ENCODE measurements at regions of chr17 and their contacts with region 1.

Region 1: DNA sequence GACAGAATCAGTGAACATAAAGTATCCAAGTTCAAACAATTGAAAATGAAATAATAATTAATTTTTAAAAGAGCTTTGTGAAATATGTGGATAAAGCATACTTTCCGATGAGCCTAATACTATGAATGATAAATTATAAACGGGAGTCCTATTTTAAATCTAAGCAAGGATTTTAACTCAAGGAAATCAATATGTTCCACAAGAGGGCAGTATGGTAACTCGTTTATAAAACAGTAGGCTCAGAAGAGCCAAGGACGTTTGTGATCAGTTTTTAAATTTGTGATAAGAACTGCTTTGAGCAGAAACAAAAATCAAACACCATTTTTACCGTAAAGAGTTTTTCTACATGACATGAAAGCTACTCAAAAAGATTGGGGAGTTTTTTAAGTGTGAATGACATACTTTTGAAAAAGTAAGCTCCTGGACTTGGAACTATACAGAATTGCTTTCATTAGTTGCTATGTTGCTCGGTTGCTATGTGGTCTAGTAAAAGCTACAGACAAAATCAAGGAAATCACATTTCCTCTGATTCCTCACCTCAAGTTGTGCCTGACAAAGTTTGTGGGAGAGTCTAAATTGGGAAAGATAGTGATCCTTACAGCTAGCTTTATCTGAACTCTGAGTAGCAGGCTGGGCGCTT is 11.8 kb upstream of the TEKT1 start:
- DNase-seq: peak in 1 of 2 experiments; percentile 74
- ATAC-seq: peak; percentile 73 to 80; a peak in 5 of 6 replicates
- H3K4me3 ChIP-seq: no peak overlapping the region
- H3K27ac ChIP-seq: peak overlapping the region in 1 of 2 experiments; percentile 44; a peak in 3 of 6 replicates
- H3K4me1 ChIP-seq: peaks cover 9% of the 10 kb centered on the region; the same call in 2 of the 3 replicates
- CTCF ChIP-seq: peak; percentile 92
- EP300 ChIP-seq: no peak
- POLR2A ChIP-seq: no peak
- RAD21 ChIP-seq: peak; percentile 84 to 91

Region 2: DNA sequence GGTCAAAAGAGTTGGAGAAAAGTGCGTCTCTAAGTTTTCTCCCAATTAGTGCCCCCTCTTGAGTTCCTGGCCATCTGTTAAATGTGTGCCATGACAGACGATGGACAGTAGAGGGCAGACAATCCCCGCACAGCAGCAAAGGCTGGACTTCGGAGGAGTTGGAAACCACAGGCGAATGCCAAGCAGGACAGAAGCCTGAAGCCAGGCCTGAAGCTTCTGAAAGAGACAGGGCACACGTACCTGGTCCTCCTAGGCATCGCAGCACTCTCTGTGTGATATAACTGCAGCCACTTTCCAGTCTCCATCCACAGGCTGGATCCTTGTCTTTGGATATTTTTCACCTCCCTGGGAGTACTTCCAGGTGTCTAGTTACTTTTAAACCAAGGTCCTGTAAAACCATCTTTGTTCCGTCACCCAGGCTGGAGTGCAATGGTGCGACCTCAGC is 177.3 kb before region 1 on chr17:
- CTCF ChIA-PET with region 1: interaction called, 39 read pairs
- POLR2A ChIA-PET with region 1: no interaction called
- DNase-seq: peak; percentile 86 to 90
- ATAC-seq: peak; percentile 87 to 94
- H3K4me3 ChIP-seq: no peak overlapping the region
- H3K27ac ChIP-seq: no peak overlapping the region
- H3K4me1 ChIP-seq: peaks cover 4% of the 10 kb centered on the region; the same call in 1 of the 3 replicates
- CTCF ChIP-seq: peak; percentile 97
- EP300 ChIP-seq: no peak
- POLR2A ChIP-seq: no peak
- RAD21 ChIP-seq: peak; percentile 97 to 99

Region 3: DNA sequence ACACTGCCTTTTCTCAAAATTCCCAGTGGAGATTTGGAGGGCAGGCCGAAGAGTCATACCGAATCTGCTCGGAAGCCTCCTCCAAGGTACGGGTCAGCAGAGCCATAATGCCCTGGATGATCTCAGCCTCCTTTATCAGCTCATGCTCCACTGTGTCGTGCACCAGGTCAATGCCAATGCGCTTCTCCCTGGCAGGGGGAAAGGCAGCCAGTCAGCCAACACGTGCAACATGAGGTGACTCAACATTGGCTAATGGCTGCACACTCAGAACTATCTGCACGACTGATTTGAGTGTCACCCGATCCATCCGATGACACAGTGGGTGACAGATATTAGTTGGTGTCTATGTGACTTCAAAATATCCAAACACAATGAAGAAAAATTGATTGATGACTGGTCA is 27.6 kb before region 1 on chr17:
- CTCF ChIA-PET with region 1: interaction called, 15 read pairs
- POLR2A ChIA-PET with region 1: no interaction called
- DNase-seq: no peak
- ATAC-seq: no peak
- H3K4me3 ChIP-seq: no peak overlapping the region
- H3K27ac ChIP-seq: no peak overlapping the region
- H3K4me1 ChIP-seq: no peaks in the 10 kb centered on the region
- CTCF ChIP-seq: no peak
- EP300 ChIP-seq: no peak
- POLR2A ChIP-seq: no peak
- RAD21 ChIP-seq: no peak

Region 4: GRCh38 chr17:6862822-6863221 is 19.5 kb after region 1 on chr17:
- CTCF ChIA-PET with region 1: interaction called, 107 read pairs
- POLR2A ChIA-PET with region 1: no interaction called
- DNase-seq: no peak
- ATAC-seq: no peak; a peak in 2 of 6 replicates
- H3K4me3 ChIP-seq: no peak overlapping the region
- H3K27ac ChIP-seq: peak overlapping the region in 1 of 2 experiments; percentile 4; a peak in 1 of 6 replicates
- H3K4me1 ChIP-seq: peaks cover 23% of the 10 kb centered on the region
- CTCF ChIP-seq: no peak
- EP300 ChIP-seq: no peak
- POLR2A ChIP-seq: no peak
- RAD21 ChIP-seq: no peak

Region 5: GRCh38 chr17:6903326-6903900 is 60.1 kb after region 1 on chr17:
- CTCF ChIA-PET with region 1: interaction called, 40 read pairs
- POLR2A ChIA-PET with region 1: no interaction called
- DNase-seq: no peak
- ATAC-seq: no peak
- H3K4me3 ChIP-seq: no peak overlapping the region
- H3K27ac ChIP-seq: no peak overlapping the region
- H3K4me1 ChIP-seq: peaks cover 12% of the 10 kb centered on the region
- CTCF ChIP-seq: no peak
- EP300 ChIP-seq: no peak
- POLR2A ChIP-seq: no peak
- RAD21 ChIP-seq: no peak

Region 6: DNA sequence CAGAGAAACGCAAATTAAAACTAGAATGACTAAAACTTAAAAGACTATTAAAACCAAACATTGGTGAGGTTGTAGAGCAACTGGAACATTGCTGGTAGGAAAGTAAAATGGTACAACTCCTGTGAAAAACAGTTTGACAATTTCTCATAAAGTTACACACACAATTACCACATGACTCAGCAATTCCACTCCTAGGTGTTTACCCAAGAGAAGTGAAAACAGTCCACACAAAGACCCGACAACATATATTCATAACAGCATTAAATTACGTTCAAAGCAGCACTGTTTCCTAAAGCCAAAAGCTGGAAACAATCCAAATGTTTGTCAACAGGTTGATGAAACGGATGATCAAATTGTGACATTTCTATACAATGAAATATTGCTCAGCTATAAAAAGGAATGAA is 126.0 kb after region 1 on chr17:
- CTCF ChIA-PET with region 1: interaction called, 18 read pairs
- POLR2A ChIA-PET with region 1: no interaction called
- DNase-seq: peak in 1 of 2 experiments; percentile 45
- ATAC-seq: no peak
- H3K4me3 ChIP-seq: no peak overlapping the region
- H3K27ac ChIP-seq: no peak overlapping the region
- H3K4me1 ChIP-seq: peaks cover 6% of the 10 kb centered on the region; the same call in 1 of the 3 replicates
- CTCF ChIP-seq: no peak
- EP300 ChIP-seq: no peak
- POLR2A ChIP-seq: no peak
- RAD21 ChIP-seq: no peak

Region 7: GRCh38 chr17:7014261-7014994 is 171.1 kb after region 1 on chr17:
- CTCF ChIA-PET with region 1: interaction called, 77 read pairs
- POLR2A ChIA-PET with region 1: interaction called, 3 read pairs
- DNase-seq: peak; percentile 96 to 98
- ATAC-seq: peak; percentile 83 to 92
- H3K4me3 ChIP-seq: peak overlapping the region; percentile 81
- H3K27ac ChIP-seq: peak overlapping the region; percentile 90 to 99
- H3K4me1 ChIP-seq: peaks cover 25% of the 10 kb centered on the region
- CTCF ChIP-seq: peak; percentile 87
- EP300 ChIP-seq: no peak
- POLR2A ChIP-seq: peak; percentile 89
- RAD21 ChIP-seq: peak in 1 of 2 experiments; percentile 61; a peak in 3 of 5 replicates

Measured in A549 (cell line).